Prostate gland (tissue), 2 donors: ENCODE measurements at regions of chr17 and their contacts with region 1.

Region 1: DNA sequence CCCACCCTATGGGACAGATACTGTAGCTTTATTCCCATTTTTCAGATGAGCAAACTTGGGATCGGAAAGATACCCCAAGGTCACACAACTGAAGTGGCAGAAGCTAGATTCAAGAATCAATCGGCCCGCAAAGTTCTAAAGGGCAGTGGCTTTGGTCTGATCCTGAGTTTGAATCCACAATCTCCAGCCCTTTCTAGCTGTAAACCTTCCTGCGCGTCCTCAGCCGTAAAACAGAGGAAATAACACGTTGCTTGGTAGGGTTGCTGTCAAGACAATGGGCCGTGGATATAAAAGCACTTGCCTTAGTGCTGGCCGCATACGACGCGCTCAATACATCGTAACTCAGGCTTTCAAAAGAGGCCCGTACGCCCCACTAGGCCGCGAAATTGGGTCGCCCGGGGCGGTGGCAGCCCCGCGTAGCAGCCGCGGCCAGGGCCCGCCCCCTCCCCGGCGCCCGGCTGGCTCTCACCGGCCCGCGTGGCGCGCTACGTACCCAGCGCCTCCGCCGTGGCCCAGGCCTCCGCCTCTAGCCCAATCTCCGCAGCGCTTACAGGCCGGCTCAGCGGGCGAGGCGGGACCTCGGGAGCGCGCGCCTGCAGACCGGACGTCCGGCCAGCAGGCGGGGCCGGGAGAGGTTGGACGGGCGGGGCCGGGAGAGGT is at the start of gene DCAKD:
- DNase-seq: peak; percentile 94
- H3K4me3 ChIP-seq: peak within 1 kb of the TSS; percentile 46 to 53
- H3K27ac ChIP-seq: peak within 1 kb of the TSS; percentile 92 to 97
- H3K4me1 ChIP-seq: peaks cover 7% of the 10 kb centered on the region
- H3K27me3 ChIP-seq: no peaks in the 10 kb centered on the region
- CTCF ChIP-seq: peak in 2 of 4 experiments; percentile 40 to 65
- POLR2A ChIP-seq: peak; percentile 95
- total RNA-seq, gene DCAKD: 91.1 to 111 TPM

Region 2: GRCh38 chr17:45063198-45063597 is 12.0 kb after region 1 on chr17:
- intact Hi-C with region 1: no loop called
- DNase-seq: no peak
- H3K4me3 ChIP-seq: no peak overlapping the region
- H3K27ac ChIP-seq: no peak overlapping the region
- H3K4me1 ChIP-seq: peaks cover 4% of the 10 kb centered on the region
- H3K27me3 ChIP-seq: no peaks in the 10 kb centered on the region
- CTCF ChIP-seq: no peak
- POLR2A ChIP-seq: no peak

Region 3: GRCh38 chr17:45092932-45093430 is 41.8 kb after region 1 on chr17:
- intact Hi-C with region 1: loop called (anchors 5 kb)
- DNase-seq: peak; percentile 91
- H3K4me3 ChIP-seq: no peak overlapping the region
- H3K27ac ChIP-seq: peak overlapping the region; percentile 77
- H3K4me1 ChIP-seq: peaks cover 6% of the 10 kb centered on the region
- H3K27me3 ChIP-seq: no peaks in the 10 kb centered on the region
- CTCF ChIP-seq: no peak
- POLR2A ChIP-seq: peak; percentile 68

Region 4: GRCh38 chr17:45384047-45384788 is 333.0 kb after region 1 on chr17:
- intact Hi-C with region 1: no loop called
- DNase-seq: no peak
- H3K4me3 ChIP-seq: no peak overlapping the region
- H3K27ac ChIP-seq: no peak overlapping the region
- H3K4me1 ChIP-seq: no peaks in the 10 kb centered on the region
- H3K27me3 ChIP-seq: no peaks in the 10 kb centered on the region
- CTCF ChIP-seq: no peak
- POLR2A ChIP-seq: no peak